ENCODE measurements at regions of chr1 and their contacts with region 1.

Region 1: GRCh38 chr1:64469977-64470664 is at the start of gene CACHD1:
- DNase-seq: peak; percentile 95
- H3K4me3 ChIP-seq: peak within 1 kb of the TSS; percentile 66 to 84 (median 81)
- H3K27ac ChIP-seq: peak within 1 kb of the TSS; percentile 80 to 89 (median 84)
- H3K4me1 ChIP-seq: peaks cover 7 to 51% (median 42%) of the 10 kb centered on the region in 4 donors
- H3K27me3 ChIP-seq: peaks cover 0 to 22% (median 2%) of the 10 kb centered on the region in 4 donors
- CTCF ChIP-seq: peak; percentile 54 to 56 (median 55)
- EP300 ChIP-seq: no peak
- POLR2A ChIP-seq: no peak
- total RNA-seq, gene CACHD1: 6.6 to 10.7 (median 10.1) TPM

Region 2: DNA sequence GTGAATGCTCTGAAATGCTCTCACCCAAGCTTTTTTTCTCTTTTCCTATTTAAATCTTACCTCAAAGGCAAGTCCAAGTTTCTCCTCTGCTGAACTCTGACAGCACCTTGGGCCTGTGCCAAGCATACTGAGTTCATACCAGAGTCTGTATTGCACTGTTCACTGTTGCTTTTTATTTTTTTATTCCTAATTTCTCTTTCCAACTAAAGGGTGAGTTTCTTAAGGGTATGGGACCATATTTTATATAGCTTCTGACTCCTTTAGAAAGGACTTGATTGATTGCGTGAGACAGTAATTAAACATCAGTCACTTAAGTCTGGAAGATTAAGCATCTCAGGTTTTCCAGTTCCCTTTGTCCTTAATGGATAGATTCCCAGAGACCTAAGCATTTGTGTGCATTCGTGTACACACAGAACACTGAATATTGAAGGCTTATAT is 69.7 kb after region 1 on chr1:
- intact Hi-C with region 1: loop called (anchors 10 kb)
- DNase-seq: no peak
- H3K4me3 ChIP-seq: peak overlapping the region; percentile 2 to 43 (median 18)
- H3K27ac ChIP-seq: peak overlapping the region; percentile 24 to 51 (median 33)
- H3K4me1 ChIP-seq: peaks cover 19 to 59% (median 47%) of the 10 kb centered on the region in 4 donors
- H3K27me3 ChIP-seq: no peaks in the 10 kb centered on the region
- CTCF ChIP-seq: no peak
- EP300 ChIP-seq: no peak
- POLR2A ChIP-seq: no peak

Region 3: DNA sequence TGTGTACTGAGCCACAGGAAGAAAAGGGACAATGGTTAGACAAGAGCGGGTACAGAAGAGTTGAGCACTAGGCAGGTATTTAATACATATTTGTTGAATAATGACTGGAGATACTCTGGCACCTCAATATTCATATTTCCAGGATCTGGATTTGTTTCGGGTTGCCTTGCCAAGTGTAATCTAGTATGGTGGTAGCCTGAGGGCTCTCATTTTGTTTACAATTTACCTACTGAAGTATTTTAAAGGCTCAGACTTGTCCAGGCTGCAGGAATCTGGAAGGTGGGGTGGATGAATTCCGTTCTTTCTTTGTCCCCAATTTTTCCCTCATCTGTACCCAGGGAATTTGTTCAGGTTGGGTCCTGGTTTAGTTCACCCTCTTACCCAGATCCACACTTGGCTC is 94.8 kb after region 1 on chr1:
- intact Hi-C with region 1: no loop called
- DNase-seq: no peak
- H3K4me3 ChIP-seq: no peak overlapping the region
- H3K27ac ChIP-seq: no peak overlapping the region
- H3K4me1 ChIP-seq: peaks cover 0 to 8% (median 3%) of the 10 kb centered on the region in 4 donors
- H3K27me3 ChIP-seq: no peaks in the 10 kb centered on the region
- CTCF ChIP-seq: no peak
- EP300 ChIP-seq: no peak
- POLR2A ChIP-seq: no peak

Region 4: DNA sequence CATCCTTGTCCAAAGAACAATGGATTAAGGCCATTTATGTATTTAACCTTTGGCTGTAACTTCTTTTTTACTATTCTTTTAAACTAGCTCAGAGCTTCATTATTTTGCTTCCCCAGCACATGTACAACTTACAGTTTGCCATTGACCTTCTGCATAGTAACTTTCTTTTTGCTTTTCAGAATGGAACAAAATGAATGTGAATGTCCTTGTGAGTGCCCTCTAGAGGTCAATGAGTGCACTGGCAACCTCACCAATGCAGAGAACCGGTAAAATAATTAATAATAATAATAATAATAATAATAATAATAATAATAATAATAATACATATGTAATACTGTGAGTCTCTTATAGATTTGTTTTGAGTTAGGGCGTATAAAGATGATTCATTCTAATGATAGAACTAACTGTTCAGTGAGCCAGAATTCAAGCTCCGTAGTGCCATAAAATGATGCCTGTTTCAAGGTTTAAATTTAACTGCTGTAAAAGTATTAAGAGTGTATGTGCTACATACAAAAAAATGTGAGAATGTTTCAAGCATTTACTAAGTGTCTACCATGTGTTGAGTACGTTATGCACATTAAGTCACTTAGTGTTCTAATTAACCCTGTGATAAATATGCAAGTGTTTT is 205.7 kb after region 1 on chr1:
- intact Hi-C with region 1: loop called (anchors 5 kb)
- DNase-seq: no peak
- H3K4me3 ChIP-seq: no peak overlapping the region
- H3K27ac ChIP-seq: no peak overlapping the region
- H3K4me1 ChIP-seq: no peaks in the 10 kb centered on the region
- H3K27me3 ChIP-seq: no peaks in the 10 kb centered on the region
- CTCF ChIP-seq: peak; percentile 45 to 76 (median 70)
- EP300 ChIP-seq: no peak
- POLR2A ChIP-seq: no peak

Region 5: DNA sequence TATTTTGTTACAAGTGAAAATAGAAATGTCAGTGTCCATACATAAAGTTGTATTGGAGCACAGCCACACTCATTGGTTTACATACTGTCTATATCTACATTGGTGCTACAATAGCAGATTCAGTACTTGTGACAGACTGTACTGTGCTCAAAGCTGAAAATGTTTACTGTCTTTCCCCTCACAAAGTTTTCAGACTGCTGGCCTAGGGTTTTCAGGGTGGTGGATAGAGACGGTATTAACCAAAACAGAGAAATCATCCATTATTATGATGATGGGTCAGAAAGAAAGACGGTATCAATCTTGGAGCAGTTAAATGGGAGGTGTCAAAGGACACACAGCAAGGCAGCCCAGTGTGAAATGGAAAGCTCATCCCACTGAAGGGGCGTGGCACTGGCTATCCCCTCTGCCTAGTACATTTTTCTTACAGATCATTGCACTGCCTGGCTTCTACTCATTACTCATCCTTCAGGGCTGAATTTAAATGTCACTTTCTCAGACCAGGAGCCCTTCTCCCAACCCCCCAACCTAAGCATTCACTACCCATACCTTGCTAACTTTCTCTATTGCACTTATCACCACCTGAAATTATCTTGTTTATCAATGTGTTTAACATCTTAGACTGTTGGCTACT is 486.0 kb after region 1 on chr1:
- intact Hi-C with region 1: no loop called
- DNase-seq: no peak
- H3K4me3 ChIP-seq: no peak overlapping the region
- H3K27ac ChIP-seq: no peak overlapping the region
- H3K4me1 ChIP-seq: peaks cover 39 to 64% (median 43%) of the 10 kb centered on the region in 4 donors
- H3K27me3 ChIP-seq: no peaks in the 10 kb centered on the region
- CTCF ChIP-seq: no peak
- EP300 ChIP-seq: no peak
- POLR2A ChIP-seq: no peak

Measured in esophagus muscularis mucosa (tissue), 4 donors.